Activated CD4-positive, alpha-beta T cell treated with anti-CD3 and anti-CD28 coated beads, Interleukin-2, amount 10 ng/mL, durations not matched to agents 7 days and 5 days (primary cell): ENCODE measurements at regions of chr5 and their contacts with region 1.

Region 1: DNA sequence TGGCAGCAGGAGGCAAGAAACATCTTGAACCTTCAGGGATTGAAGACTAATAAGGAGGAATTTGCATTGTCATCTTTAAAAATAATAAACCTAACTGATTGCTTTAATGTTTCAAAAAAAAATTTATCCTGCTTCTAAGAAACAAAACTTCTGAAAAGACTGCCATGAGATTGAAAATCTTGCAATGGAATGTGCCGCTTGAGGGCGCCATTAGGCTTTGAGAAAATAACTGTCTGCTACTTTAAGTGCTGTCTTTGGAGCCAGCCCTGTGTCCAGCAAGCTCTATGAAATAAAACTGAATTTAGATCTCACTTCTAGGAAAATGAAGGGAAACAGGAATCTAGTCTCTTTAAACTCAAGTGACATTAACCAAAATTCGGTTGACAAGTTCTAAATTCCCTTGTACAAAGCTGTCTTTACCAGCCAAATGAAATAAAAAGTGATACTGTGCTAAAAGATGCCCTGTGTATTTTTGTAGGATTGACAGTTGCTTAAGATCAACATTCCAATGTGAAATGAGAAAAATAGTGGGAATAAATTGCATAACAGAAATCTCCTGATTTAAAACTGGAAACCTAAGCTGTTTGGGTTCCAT is 79.4 kb downstream of the ESM1 start:
- DNase-seq: peak; percentile 82
- H3K4me3 Mint-ChIP-seq: no peak overlapping the region
- H3K27ac Mint-ChIP-seq: no peak overlapping the region
- H3K4me1 Mint-ChIP-seq: peaks cover 63% of the 10 kb centered on the region
- H3K27me3 Mint-ChIP-seq: peaks cover 31% of the 10 kb centered on the region

Region 2: DNA sequence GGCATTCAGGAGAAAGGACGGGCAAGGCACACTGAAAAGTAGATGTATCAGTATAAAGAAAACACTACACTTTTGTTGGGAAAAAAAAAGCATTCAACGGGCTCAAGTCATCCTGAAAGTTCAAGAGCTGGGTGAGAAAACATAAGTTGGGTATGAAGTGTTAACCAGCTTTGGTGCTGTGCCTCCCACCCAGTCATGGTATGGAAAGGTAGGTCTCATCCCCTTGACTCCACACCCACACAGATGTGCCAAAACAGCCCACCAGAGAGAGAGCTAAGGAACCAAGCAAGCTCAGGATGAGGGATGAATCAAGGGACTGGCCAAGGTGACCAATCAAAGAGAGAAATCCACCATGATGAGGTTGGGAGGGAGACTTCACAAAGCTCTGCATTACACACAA is 24.7 kb after region 1 on chr5:
- CTCF ChIA-PET with region 1: interaction called, 11 read pairs
- POLR2A ChIA-PET with region 1: no interaction called
- DNase-seq: no peak
- H3K4me3 Mint-ChIP-seq: no peak overlapping the region
- H3K27ac Mint-ChIP-seq: no peak overlapping the region
- H3K4me1 Mint-ChIP-seq: peaks cover 14% of the 10 kb centered on the region
- H3K27me3 Mint-ChIP-seq: peaks cover 26% of the 10 kb centered on the region

Region 3: DNA sequence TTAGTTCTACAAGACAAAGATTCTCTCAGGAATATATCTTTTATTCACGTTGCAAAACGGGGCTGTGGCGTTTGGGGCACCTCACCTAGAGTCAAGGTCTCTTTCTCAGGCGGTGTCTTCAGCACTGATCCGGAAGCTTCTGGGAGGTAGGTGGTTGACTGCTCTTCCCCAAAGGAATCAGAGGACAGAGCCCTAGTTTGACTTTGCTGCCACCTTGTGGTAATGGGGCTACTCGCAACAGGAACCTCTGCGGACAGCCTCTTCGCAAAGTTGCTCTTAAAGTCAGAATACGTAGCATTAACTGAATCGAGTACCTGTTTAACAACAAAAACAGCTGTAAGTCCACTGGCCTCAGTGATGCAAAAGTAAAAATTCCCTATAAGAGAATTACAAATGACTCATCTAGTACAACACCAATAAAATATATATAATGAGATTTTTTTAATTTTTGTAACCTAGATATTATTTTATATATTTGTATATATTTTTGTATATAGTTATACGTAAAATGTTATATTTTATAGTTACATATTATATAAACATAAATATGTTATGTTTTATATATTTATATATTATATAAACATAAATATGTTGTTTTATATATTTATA is 240.6 kb after region 1 on chr5:
- CTCF ChIA-PET with region 1: interaction called, 10 read pairs
- POLR2A ChIA-PET with region 1: no interaction called
- DNase-seq: peak; percentile 91
- H3K4me3 Mint-ChIP-seq: peak overlapping the region; percentile 4
- H3K27ac Mint-ChIP-seq: peak overlapping the region; percentile 43
- H3K4me1 Mint-ChIP-seq: peaks cover 36% of the 10 kb centered on the region
- H3K27me3 Mint-ChIP-seq: peaks cover 48% of the 10 kb centered on the region

Region 4: DNA sequence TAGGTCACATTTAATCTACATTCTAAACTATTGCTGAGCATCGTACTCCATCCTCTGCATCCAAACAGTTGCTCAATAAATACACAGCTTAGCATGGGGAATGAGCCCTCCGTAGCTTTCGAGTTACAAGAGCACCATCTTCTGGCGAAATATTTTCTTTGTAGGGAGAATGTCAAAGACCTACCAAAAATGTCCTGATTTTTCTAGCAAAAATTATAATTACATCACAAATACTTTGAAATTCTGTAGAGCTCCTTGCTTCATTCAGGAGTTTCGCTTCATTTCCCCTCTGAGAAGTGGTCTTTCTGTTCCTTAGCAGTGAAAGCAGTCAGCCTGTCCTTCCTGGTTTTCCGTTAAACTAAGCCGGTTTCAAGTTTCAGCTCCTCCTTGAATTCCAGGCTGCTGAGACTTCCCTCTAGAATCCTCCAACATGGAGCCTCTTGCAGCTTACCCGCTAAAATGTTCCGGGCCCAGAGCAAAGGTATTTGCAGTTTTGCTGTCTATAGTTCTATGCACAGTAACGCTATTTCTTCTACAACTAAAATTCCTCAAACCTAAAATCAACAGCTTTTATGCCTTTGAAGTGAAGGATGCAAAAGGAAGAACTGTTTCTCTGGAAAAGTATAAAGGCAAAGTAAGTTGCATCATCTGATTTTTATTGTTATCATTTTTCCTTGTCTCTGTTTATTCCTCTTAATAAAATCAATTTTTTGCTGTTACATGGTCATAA is 253.9 kb after region 1 on chr5 and contains the start of gene GPX8:
- CTCF ChIA-PET with region 1: interaction called, 23 read pairs
- POLR2A ChIA-PET with region 1: interaction called, 3 read pairs
- DNase-seq: peak; percentile 58
- H3K4me3 Mint-ChIP-seq: no peak within 1 kb of the TSS
- H3K27ac Mint-ChIP-seq: no peak within 1 kb of the TSS
- H3K4me1 Mint-ChIP-seq: peaks cover 8% of the 10 kb centered on the region
- H3K27me3 Mint-ChIP-seq: peaks cover 69% of the 10 kb centered on the region
- total RNA-seq, gene GPX8: not detected